ENCODE measurements at regions of chr16 and their contacts with region 1.

Region 1: DNA sequence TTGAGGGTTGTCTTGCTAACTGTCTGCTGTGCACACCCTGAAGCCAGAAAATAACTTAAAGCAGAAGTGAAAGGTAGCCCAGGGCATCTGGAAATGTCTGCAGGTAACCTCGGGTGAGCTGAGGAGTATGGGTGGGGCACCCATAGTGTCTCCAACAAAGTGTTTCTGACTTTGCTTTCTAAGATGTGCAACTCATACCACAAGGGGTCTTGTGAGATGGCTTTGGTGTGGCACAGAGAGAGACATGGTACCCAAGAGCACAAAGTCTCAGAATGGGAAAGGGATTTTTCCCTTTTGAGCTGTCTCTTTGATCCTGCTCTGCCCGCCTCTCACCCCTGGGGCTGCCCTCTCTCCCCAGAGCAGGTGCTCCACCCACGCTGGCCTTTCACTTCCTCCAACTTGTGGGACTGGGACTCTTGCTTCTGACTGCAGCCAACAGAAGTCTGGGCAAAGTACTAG is 6.9 kb downstream of the CHD9 start:
- DNase-seq: peak; percentile 96
- ATAC-seq: peak; percentile 78
- H3K4me3 ChIP-seq: peak overlapping the region; percentile 64; the same call in 1 of the 2 replicates
- H3K27ac ChIP-seq: peak overlapping the region; percentile 52
- H3K4me1 ChIP-seq: peaks cover 66% of the 10 kb centered on the region
- H3K27me3 ChIP-seq: no peaks in the 10 kb centered on the region
- CTCF ChIP-seq: peak; percentile 13 to 14 (median 13); a peak in 2 of 6 replicates
- EP300 ChIP-seq: peak; percentile 97 to 98
- POLR2A ChIP-seq: no peak
- RAD21 ChIP-seq: peak; percentile 16; the same call in 1 of the 2 replicates

Region 2: DNA sequence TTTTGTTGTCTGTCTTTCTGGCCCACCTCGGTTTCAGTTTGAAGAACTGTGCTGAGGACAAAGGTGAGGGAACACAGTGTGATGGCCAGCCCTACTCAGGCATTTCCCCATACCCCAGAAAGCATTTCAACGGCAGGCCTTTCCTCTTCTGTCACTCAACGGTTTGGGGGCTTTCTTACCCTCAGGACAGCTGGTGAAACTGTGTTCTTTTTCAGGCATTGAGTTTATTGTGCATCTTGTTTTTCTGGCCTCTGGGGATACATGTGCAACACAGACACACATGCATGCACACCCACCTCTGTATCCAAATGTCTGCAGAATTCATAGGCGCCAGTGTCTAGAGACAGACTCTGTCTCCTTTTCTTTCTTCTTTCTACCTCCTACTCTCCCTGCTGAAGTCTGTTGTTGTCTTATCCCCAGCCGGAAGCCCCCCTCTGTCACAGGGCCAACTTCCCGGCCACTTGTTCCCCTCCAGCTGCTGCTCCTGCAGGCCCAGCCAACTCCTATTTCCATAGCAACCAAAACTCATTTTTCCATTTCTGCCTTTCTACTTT is 10.1 kb after region 1 on chr16:
- CTCF ChIA-PET with region 1: interaction called, 8 read pairs
- POLR2A ChIA-PET with region 1: interaction called, 15 read pairs
- RAD21 ChIA-PET with region 1: interaction called, 23 read pairs
- SMC1A ChIA-PET with region 1: interaction called, 60 read pairs
- in situ Hi-C with region 1: no loop called
- intact Hi-C with region 1: loop called (anchors 1 kb)
- DNase-seq: no peak
- ATAC-seq: peak; percentile 80
- H3K4me3 ChIP-seq: peak overlapping the region; percentile 52
- H3K27ac ChIP-seq: peak overlapping the region; percentile 78
- H3K4me1 ChIP-seq: peaks cover 55% of the 10 kb centered on the region
- H3K27me3 ChIP-seq: no peaks in the 10 kb centered on the region
- CTCF ChIP-seq: no peak
- EP300 ChIP-seq: peak; percentile 37 to 47; a peak in 2 of 4 replicates
- POLR2A ChIP-seq: no peak
- RAD21 ChIP-seq: no peak; the same call in 1 of the 2 replicates

Region 3: DNA sequence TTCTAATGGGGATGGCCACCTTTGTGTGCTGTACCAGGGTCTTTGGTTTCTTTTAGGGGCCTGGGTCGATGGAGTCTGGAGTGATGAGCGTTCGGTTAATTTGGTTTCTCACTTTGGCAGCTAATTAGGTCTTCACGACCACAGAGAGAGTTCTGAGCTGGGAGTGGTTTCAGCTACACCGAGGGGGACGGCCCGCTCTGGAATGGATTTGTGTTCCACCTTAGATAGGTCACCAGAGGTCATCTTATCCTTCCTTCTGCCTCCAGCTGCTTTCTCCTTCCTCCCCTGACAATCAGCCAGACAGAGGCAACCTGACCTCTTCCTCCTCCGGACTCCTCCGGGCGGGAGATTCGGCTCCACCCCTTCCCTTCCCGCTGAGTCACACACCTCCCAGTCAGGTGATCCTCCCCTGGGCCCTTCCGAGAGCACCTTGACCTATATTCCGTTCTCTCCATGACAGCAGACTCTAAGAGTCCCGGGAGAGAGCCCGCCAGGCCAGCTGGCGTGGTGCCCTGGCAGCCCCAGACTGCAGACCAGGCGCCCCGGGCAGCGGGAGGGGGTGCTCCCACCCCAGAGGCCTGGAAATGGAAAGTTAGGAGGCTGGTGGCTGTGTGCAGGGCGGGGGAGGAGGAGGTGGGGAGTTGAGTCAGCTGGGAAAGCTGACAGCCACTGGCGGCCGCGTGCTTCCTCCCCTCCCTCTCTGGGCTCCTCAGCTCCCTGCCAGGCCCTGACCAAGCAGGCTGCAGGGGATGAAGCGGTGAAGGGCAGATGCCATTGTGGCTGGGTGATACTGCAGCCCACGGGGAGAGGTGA is 37.8 kb after region 1 on chr16:
- CTCF ChIA-PET with region 1: interaction called, 17 read pairs
- POLR2A ChIA-PET with region 1: interaction called, 142 read pairs
- RAD21 ChIA-PET with region 1: interaction called, 107 read pairs
- SMC1A ChIA-PET with region 1: interaction called, 270 read pairs
- in situ Hi-C with region 1: loop called (anchors 5 kb)
- intact Hi-C with region 1: loop called (anchors 1 kb)
- DNase-seq: peak; percentile 68
- ATAC-seq: peak; percentile 75
- H3K4me3 ChIP-seq: peak overlapping the region; percentile 79
- H3K27ac ChIP-seq: peak overlapping the region; percentile 96
- H3K4me1 ChIP-seq: peaks cover 25% of the 10 kb centered on the region
- H3K27me3 ChIP-seq: no peaks in the 10 kb centered on the region
- CTCF ChIP-seq: no peak
- EP300 ChIP-seq: peak; percentile 7 to 55; a peak in 1 of 4 replicates
- POLR2A ChIP-seq: peak; percentile 50
- RAD21 ChIP-seq: no peak

Region 4: GRCh38 chr16:53123747-53124146 is 62.0 kb after region 1 on chr16:
- CTCF ChIA-PET with region 1: interaction called, 30 read pairs
- POLR2A ChIA-PET with region 1: interaction called, 12 read pairs
- RAD21 ChIA-PET with region 1: interaction called, 32 read pairs
- SMC1A ChIA-PET with region 1: interaction called, 11 read pairs
- in situ Hi-C with region 1: no loop called
- intact Hi-C with region 1: no loop called
- DNase-seq: no peak
- ATAC-seq: no peak
- H3K4me3 ChIP-seq: no peak overlapping the region
- H3K27ac ChIP-seq: no peak overlapping the region
- H3K4me1 ChIP-seq: peaks cover 21% of the 10 kb centered on the region
- H3K27me3 ChIP-seq: no peaks in the 10 kb centered on the region
- CTCF ChIP-seq: no peak
- EP300 ChIP-seq: no peak
- POLR2A ChIP-seq: no peak
- RAD21 ChIP-seq: no peak

Region 5: GRCh38 chr16:53159781-53160436 is 98.2 kb after region 1 on chr16:
- CTCF ChIA-PET with region 1: interaction called, 64 read pairs
- POLR2A ChIA-PET with region 1: no interaction called
- RAD21 ChIA-PET with region 1: interaction called, 73 read pairs
- SMC1A ChIA-PET with region 1: interaction called, 88 read pairs
- in situ Hi-C with region 1: no loop called
- intact Hi-C with region 1: no loop called
- DNase-seq: peak; percentile 20
- ATAC-seq: peak; percentile 99
- H3K4me3 ChIP-seq: no peak overlapping the region
- H3K27ac ChIP-seq: no peak overlapping the region
- H3K4me1 ChIP-seq: no peaks in the 10 kb centered on the region
- H3K27me3 ChIP-seq: no peaks in the 10 kb centered on the region
- CTCF ChIP-seq: peak; percentile 61 to 67 (median 65)
- EP300 ChIP-seq: no peak
- POLR2A ChIP-seq: no peak
- RAD21 ChIP-seq: peak; percentile 66

Region 6: GRCh38 chr16:53220585-53220984 is 158.9 kb after region 1 on chr16:
- CTCF ChIA-PET with region 1: interaction called, 33 read pairs
- POLR2A ChIA-PET with region 1: interaction called, 3 read pairs
- RAD21 ChIA-PET with region 1: interaction called, 12 read pairs
- SMC1A ChIA-PET with region 1: interaction called, 23 read pairs
- in situ Hi-C with region 1: loop called (anchors 5 kb)
- intact Hi-C with region 1: no loop called
- DNase-seq: no peak
- ATAC-seq: peak; percentile 81
- H3K4me3 ChIP-seq: no peak overlapping the region
- H3K27ac ChIP-seq: peak overlapping the region; percentile 38; the same call in 1 of the 2 replicates
- H3K4me1 ChIP-seq: peaks cover 18% of the 10 kb centered on the region; the same call in 1 of the 2 replicates
- H3K27me3 ChIP-seq: no peaks in the 10 kb centered on the region
- CTCF ChIP-seq: peak; percentile 25 to 40 (median 38); a peak in 3 of 6 replicates
- EP300 ChIP-seq: no peak
- POLR2A ChIP-seq: no peak
- RAD21 ChIP-seq: peak; percentile 57

Region 7: GRCh38 chr16:53503270-53503923 is 441.7 kb after region 1 on chr16:
- CTCF ChIA-PET with region 1: no interaction called
- POLR2A ChIA-PET with region 1: interaction called, 3 read pairs
- RAD21 ChIA-PET with region 1: no interaction called
- SMC1A ChIA-PET with region 1: interaction called, 3 read pairs
- in situ Hi-C with region 1: no loop called
- intact Hi-C with region 1: loop called (anchors 5 kb)
- DNase-seq: peak; percentile 99
- ATAC-seq: peak; percentile 93
- H3K4me3 ChIP-seq: peak overlapping the region; percentile 94
- H3K27ac ChIP-seq: peak overlapping the region; percentile 87
- H3K4me1 ChIP-seq: peaks cover 12% of the 10 kb centered on the region
- H3K27me3 ChIP-seq: no peaks in the 10 kb centered on the region
- CTCF ChIP-seq: no peak
- EP300 ChIP-seq: no peak
- POLR2A ChIP-seq: peak; percentile 95
- RAD21 ChIP-seq: no peak